ENCODE measurements at regions of chr1 and their contacts with region 1.

Region 1: DNA sequence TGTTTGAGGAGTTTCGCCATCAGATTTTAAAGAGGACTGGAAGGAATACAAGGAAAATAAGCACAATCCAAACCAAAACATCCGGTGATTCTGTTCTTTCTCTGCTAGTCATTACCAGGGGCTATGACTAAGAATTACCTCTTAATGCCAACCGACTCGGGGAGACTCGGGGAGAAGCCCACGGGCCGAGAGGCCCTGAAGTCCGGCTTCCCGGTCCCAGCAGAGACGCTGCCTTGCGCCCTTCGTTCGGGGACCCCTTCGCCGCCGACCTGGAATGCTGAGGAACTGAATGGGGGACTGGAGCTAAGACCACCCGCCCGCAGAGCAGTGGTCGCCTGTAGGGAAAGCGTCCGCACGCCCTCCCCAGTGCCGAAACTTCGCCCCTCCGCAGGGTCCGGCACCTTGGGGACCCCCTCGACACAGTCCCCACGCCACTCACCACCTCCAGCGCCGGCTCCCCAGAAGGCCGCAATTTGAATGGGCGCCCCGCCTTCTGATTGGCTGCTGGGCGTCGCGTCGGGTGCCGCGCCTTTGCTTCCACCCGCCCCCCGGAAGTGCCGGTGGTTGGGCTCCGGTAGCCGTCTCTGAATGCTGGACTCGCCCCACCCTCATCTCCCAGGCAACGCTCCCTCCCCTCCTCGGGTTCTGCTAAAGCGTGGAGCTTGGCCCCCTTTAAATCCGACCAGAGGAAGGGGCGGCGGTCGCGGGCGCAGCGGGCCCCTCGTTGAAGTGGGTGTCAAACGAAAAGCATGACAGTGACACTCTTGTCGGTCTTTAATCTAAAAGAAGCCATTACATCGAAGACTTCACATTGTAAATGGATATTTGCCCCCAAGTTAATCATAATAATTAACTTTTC is at the start of gene KIF14:
- DNase-seq: peak; percentile 93 to 97
- ATAC-seq: peak; percentile 99 to 100
- H3K4me3 ChIP-seq: peak within 1 kb of the TSS; percentile 86
- H3K27ac ChIP-seq: peak within 1 kb of the TSS; percentile 79 to 91
- H3K4me1 ChIP-seq: peaks cover 12% of the 10 kb centered on the region; the same call in 2 of the 3 replicates
- CTCF ChIP-seq: no peak
- EP300 ChIP-seq: no peak
- POLR2A ChIP-seq: no peak
- RAD21 ChIP-seq: no peak
- polyA plus RNA-seq, gene KIF14: 13.5 and 20.4 TPM in 2 replicates

Region 2: DNA sequence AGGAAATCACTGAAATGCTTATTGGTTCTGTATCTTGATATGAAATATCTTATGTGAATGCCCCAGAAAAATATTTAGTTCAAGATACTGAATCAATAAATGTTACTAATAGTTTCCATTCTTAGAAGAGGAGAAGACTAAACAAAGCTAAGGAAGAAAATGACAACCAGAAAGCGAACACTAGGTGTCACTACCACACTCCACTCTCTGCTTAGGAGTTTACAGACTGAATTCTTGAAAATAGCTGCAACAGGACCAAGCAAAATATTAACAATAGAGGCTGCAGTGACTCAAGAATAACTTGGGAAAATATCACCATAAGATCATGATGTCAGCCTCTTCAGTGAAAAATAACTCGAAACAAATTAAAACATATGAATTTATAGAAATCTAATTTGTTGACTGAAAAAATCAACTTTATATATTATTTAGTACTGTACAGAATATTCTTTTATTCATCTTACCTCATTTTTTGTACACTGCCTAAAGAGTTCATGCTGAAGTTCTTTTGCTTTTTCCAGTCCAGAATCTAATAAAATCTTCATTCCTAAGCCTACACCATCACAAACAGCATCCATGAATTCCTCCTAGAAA is 61.5 kb before region 1 on chr1:
- CTCF ChIA-PET with region 1: interaction called, 10 read pairs
- POLR2A ChIA-PET with region 1: no interaction called
- DNase-seq: peak; percentile 44 to 64
- ATAC-seq: peak; percentile 85 to 89
- H3K4me3 ChIP-seq: no peak overlapping the region
- H3K27ac ChIP-seq: no peak overlapping the region
- H3K4me1 ChIP-seq: no peaks in the 10 kb centered on the region
- CTCF ChIP-seq: peak; percentile 85
- EP300 ChIP-seq: no peak
- POLR2A ChIP-seq: no peak
- RAD21 ChIP-seq: peak; percentile 67 to 68

Region 3: DNA sequence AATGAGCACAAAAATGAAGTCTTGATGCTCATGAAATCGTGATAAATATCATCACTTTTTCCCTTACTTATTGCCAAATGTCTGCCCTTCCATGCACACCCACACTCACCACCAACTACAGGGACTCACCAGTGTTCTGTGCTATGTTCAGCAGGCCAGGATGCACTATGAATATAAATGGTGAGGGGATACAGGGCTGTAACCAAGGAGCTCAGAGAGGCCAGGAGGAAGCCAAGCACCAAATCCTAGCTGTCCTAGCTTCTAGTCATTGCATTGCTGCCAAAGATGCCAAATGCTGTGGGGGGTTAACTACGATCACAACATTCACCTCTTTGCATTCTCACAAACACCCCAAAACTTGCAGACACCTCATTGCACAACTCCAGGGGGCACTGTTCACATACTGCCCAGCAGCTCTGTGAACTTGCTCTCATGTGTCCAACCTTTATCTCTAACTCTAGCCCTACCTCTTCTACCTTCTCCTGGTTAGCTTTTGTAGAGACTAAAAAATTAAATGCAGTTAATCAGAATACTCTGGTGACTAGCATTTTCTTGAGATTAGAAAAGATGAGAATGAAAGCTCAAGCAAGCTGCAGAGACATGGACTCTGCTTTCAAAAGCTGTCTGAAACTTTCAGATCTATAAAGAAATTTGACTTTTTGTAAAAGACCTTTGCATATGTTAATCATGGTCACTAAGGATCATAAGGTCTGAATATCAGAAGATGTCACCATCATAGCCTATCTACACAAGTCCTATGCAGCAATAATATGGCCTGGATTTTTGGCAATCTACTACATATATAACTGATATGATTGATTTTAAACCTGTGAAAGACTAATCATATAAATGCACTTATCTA is 14.0 kb after region 1 on chr1:
- CTCF ChIA-PET with region 1: interaction called, 27 read pairs
- POLR2A ChIA-PET with region 1: no interaction called
- DNase-seq: peak in 1 of 2 experiments; percentile 21
- ATAC-seq: peak; percentile 19 to 36; a peak in 1 of 6 replicates
- H3K4me3 ChIP-seq: no peak overlapping the region
- H3K27ac ChIP-seq: no peak overlapping the region
- H3K4me1 ChIP-seq: peaks cover 1% of the 10 kb centered on the region; the same call in 2 of the 3 replicates
- CTCF ChIP-seq: peak; percentile 38
- EP300 ChIP-seq: no peak
- POLR2A ChIP-seq: no peak
- RAD21 ChIP-seq: peak in 1 of 2 experiments; percentile 42; a peak in 1 of 5 replicates

Region 4: DNA sequence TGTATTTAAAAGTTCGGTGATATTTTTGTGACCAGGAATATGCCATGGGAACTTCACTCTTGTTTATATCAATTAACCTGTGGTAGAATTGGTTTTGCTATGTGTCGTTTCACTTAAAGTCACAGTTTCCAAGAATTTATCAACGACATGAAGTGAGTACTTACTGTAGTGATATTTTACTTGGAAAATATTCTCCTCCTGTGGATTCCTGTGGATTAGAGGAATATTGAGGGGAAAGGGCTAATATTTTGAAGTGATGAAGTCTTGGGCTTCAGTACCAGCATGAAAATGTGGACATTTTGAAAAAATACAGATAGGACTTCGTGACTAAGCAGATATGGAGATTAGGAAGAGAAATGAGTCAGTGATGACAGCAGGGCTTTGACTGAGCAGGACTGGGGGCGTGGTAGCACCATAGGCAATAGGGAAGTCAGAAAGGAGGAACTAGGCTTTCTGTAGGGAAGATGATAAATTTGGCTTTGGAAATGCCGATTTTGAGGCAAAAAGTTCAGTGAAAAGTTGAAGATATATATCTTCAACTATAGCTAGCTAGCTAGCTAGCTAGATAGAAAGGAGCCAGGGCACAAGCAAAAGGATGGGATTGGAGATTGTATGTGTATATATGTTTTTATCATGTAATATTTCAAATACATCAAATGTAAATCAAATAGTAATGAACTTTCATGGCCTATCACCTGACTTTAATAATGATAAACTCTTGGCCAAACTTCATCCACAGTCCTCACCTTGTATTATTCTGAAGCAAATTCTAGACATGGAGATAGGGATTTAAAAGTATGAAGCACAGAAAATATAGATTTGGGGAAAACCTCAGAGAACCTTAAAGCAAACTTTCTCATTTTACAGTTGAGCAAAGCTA is 19.5 kb after region 1 on chr1:
- CTCF ChIA-PET with region 1: interaction called, 27 read pairs
- POLR2A ChIA-PET with region 1: no interaction called
- DNase-seq: peak; percentile 89 to 93
- ATAC-seq: peak; percentile 99 to 100
- H3K4me3 ChIP-seq: no peak overlapping the region
- H3K27ac ChIP-seq: peak overlapping the region; percentile 89 to 90
- H3K4me1 ChIP-seq: peaks cover 18% of the 10 kb centered on the region
- CTCF ChIP-seq: no peak
- EP300 ChIP-seq: no peak
- POLR2A ChIP-seq: no peak
- RAD21 ChIP-seq: no peak

Region 5: GRCh38 chr1:200802865-200803512 is 182.5 kb after region 1 on chr1:
- CTCF ChIA-PET with region 1: interaction called, 68 read pairs
- POLR2A ChIA-PET with region 1: no interaction called
- DNase-seq: peak; percentile 81 to 84
- ATAC-seq: peak; percentile 96 to 99
- H3K4me3 ChIP-seq: no peak overlapping the region
- H3K27ac ChIP-seq: no peak overlapping the region
- H3K4me1 ChIP-seq: peaks cover 9% of the 10 kb centered on the region; the same call in 1 of the 3 replicates
- CTCF ChIP-seq: peak; percentile 93
- EP300 ChIP-seq: no peak
- POLR2A ChIP-seq: no peak
- RAD21 ChIP-seq: peak; percentile 87 to 89

Region 6: DNA sequence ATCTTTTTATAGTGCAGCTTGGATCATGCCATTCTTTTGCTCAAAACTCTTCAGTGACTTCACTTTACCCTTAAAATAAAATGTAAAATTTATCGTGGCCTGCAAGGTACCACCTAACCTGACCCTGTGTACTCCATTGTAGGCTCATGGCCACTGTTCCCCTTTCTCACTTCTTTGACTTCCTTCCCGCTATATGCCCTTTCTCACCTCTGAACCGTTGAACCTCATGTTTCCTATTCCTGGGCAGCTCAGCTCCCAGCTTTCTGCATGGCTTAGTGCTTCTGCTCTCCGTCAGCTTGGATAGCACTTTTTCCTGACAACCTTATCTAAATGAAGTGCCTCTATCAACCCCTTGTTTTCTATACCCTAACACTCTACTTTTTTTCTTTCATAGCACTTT is 191.2 kb after region 1 on chr1:
- CTCF ChIA-PET with region 1: interaction called, 24 read pairs
- POLR2A ChIA-PET with region 1: no interaction called
- DNase-seq: no peak
- ATAC-seq: no peak
- H3K4me3 ChIP-seq: no peak overlapping the region
- H3K27ac ChIP-seq: no peak overlapping the region
- H3K4me1 ChIP-seq: no peaks in the 10 kb centered on the region
- CTCF ChIP-seq: no peak
- EP300 ChIP-seq: no peak
- POLR2A ChIP-seq: no peak
- RAD21 ChIP-seq: no peak